Cardiac septum (tissue), 1 donor: ENCODE measurements at regions of chr19 and their contacts with region 1.

Region 1: DNA sequence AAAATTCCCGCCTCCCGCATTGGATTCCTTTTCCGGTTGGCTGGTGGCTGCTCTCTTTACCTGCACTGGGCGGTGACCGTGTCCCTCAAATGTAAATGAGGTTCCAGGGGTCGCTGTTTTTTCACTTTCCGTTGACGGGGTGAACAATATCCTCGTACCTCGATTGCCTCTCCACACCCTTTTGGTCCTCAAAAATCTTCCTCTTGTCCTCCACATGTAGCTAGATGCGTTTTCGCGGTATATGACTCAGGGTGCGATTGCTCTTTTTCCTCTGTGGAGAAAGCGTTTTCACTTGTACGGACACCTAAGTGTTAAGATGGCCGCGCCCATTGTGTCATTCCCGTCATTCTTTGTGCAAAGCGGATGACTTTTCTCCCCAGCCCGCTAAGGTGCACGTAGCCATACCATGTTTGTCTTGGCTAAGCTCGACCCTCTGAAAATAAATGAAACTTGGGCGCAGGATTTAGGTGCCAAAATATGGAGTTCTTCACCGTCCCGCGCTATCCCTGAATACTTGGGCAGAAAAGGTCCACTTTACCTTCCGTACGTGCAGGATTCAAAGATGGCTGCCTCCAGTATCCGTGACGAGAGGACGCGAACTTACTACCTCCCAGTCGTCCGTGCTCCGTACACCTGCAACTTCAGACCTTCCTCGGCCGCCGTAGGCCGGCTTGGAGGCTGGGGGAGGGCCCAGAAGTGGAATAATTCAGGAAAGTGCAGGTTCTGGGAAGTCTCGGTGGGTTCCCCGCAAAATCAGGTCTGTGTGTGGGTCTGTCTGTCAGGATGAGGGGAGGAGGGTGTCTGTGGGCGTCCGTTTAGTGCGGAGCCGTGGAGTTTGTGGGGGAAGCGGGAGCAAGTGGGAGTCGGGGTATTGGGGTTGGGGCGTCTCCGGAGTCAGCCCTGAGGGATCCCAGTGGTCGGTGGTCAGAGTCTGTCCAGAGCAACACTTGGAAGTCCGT is at the start of gene ZNF613:
- DNase-seq: peak; percentile 94
- total RNA-seq, gene ZNF613: 3.8 TPM

Region 2: GRCh38 chr19:51552996-51553725 is 373.9 kb before region 1 on chr19:
- intact Hi-C with region 1: no loop called
- DNase-seq: no peak

Region 3: GRCh38 chr19:51904331-51905165 is 22.5 kb before region 1 on chr19 and contains the start of gene ZNF649:
- intact Hi-C with region 1: loop called (anchors 1 kb)
- DNase-seq: peak; percentile 92
- total RNA-seq, gene ZNF649: 8.6 TPM